BJ (cell line): ENCODE measurements at regions of chr3 and their contacts with region 1.

Region 1: GRCh38 chr3:87298111-87298718 is 21.8 kb upstream of the POU1F1 start:
- DNase-seq: no peak
- H3K4me3 ChIP-seq: no peak overlapping the region
- H3K27me3 ChIP-seq: peaks cover 1% of the 10 kb centered on the region; the same call in 1 of the 2 replicates
- CTCF ChIP-seq: peak; percentile 55

Region 2: DNA sequence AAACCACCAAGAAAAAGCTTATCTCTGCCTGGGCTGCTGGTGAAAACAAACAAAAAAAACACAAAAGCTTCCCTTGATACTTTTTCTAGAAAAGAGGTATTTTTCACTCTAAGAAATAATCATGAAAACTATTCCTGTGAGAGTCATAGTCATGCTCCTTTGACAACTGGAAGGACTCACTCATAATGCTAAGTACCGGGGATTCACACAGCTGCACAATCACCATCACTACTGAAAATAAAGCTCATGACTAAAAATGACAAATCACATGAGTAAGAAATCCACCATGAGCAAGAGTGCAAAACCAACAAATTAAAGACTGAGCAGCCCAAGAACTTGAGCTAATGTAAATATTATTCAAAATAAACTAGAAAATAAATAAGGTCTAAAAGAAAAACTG is 11.2 kb before region 1 on chr3:
- CTCF ChIA-PET with region 1: interaction called, 15 read pairs
- POLR2A ChIA-PET with region 1: no interaction called
- DNase-seq: no peak
- H3K4me3 ChIP-seq: no peak overlapping the region
- H3K27me3 ChIP-seq: no peaks in the 10 kb centered on the region
- CTCF ChIP-seq: no peak

Region 3: GRCh38 chr3:87503900-87504508 is 205.8 kb after region 1 on chr3:
- CTCF ChIA-PET with region 1: interaction called, 23 read pairs
- POLR2A ChIA-PET with region 1: no interaction called
- DNase-seq: peak; percentile 19
- H3K4me3 ChIP-seq: no peak overlapping the region
- H3K27me3 ChIP-seq: no peaks in the 10 kb centered on the region
- CTCF ChIP-seq: peak; percentile 78